ENCODE measurements at regions of chr17 and their contacts with region 1.

Region 1: GRCh38 chr17:49788478-49789242 is at the start of gene KAT7:
- DNase-seq: peak; percentile 97

Region 2: DNA sequence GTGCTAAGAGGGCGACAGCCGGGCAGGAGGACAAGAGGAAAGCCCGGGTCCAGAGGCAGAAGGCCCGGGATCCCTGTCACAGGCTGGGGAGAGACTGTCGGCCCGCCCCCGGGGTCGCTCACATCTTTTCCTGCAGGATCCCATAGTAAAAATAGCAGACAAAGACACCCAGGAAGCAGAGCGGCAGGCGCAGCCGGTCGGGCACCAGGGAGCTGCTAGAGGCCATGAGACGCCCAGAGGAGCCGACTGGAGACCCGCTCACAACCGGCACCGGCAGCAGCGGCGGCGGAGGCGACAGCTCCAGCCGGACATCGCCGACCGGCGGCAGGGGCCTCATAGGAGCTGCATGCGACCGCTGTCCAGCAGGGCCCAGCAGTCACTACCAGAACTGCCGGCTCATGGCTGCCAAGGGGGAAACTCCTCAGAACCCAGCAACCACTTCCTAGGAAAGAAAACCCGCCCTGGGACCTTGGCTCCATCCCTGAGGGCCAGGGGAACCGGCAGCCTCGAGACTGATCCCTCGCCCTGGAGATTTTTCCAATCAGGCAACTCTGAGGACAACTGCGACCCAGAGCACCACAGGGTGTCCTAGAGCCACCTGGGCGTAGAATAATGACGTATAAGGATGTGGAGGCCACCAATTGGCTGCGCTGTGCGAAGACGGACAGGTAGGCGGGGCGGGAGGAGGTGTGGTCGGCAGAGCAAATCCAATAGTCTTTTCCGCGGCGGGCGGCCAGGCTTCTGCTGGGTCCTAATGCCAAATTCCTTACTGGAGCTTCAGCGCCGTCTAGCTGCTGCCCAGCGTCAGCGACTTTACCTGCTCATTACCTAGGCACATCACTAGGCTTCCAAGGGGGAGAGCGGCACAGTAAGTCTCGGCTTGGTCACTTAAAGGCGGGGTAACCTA is 80.8 kb before region 1 on chr17 and contains the start of gene SLC35B1:
- CTCF ChIA-PET with region 1: no interaction called
- POLR2A ChIA-PET with region 1: interaction called, 15 read pairs
- DNase-seq: peak; percentile 99

Region 3: GRCh38 chr17:49763735-49764558 is 24.7 kb before region 1 on chr17 and contains the start of gene FAM117A:
- CTCF ChIA-PET with region 1: no interaction called
- POLR2A ChIA-PET with region 1: interaction called, 20 read pairs
- DNase-seq: peak; percentile 99

Region 4: GRCh38 chr17:49775543-49776260 is 13.0 kb before region 1 on chr17:
- CTCF ChIA-PET with region 1: no interaction called
- POLR2A ChIA-PET with region 1: interaction called, 25 read pairs
- DNase-seq: no peak

Region 5: GRCh38 chr17:49861150-49861892 is 72.7 kb after region 1 on chr17:
- CTCF ChIA-PET with region 1: no interaction called
- POLR2A ChIA-PET with region 1: no interaction called
- DNase-seq: peak; percentile 80

Region 6: GRCh38 chr17:49880291-49881053 is 91.8 kb after region 1 on chr17:
- CTCF ChIA-PET with region 1: no interaction called
- POLR2A ChIA-PET with region 1: no interaction called
- DNase-seq: peak; percentile 96

Region 7: DNA sequence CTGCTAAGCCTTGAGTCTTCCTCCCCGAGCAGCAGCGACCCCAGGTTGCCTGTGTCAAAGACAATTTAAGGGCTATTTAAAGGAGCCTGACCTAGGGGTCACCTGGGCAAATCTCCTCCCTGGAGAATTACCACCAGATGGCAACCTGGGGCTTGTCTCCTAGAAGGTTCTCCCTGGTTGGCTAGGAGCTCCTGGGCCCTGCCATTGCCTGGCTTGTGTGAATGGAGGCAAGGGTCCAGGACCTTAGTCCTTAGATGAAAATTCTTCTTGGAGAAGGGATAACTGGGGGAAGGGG is 110.5 kb after region 1 on chr17:
- CTCF ChIA-PET with region 1: no interaction called
- POLR2A ChIA-PET with region 1: no interaction called
- DNase-seq: peak; percentile 37

Measured in HEK293T (cell line).